HAP-1 (cell line): ENCODE measurements at regions of chr10 and their contacts with region 1.

Region 1: GRCh38 chr10:69237528-69238159 is 17.5 kb downstream of the HKDC1 start:
- DNase-seq: peak; percentile 62 to 91
- H3K4me3 ChIP-seq: no peak overlapping the region
- H3K4me1 ChIP-seq: peaks cover 3% of the 10 kb centered on the region
- H3K27me3 ChIP-seq: no peaks in the 10 kb centered on the region

Region 2: DNA sequence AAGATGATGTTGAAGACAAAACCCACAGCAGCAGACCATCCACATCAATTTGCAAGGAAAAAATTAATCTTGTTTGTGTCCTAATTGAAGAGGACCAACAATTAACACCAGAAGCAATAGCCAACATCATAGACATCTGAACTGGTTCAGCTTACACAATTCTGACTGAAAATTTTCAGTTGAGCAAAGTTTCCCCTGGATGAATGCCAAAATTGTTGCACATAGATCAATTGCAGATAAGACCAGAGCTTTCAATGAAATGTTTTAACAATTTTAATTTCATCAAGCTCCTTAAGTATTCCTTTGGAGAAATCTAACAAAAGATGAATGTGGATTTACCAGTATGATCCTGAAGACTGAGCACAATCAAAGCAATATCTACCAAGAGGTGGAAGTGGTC is 1710.3 kb before region 1 on chr10:
- in situ Hi-C with region 1: no loop called
- DNase-seq: no peak
- H3K4me3 ChIP-seq: no peak overlapping the region
- H3K4me1 ChIP-seq: peaks cover 17% of the 10 kb centered on the region
- H3K27me3 ChIP-seq: no peaks in the 10 kb centered on the region

Region 3: DNA sequence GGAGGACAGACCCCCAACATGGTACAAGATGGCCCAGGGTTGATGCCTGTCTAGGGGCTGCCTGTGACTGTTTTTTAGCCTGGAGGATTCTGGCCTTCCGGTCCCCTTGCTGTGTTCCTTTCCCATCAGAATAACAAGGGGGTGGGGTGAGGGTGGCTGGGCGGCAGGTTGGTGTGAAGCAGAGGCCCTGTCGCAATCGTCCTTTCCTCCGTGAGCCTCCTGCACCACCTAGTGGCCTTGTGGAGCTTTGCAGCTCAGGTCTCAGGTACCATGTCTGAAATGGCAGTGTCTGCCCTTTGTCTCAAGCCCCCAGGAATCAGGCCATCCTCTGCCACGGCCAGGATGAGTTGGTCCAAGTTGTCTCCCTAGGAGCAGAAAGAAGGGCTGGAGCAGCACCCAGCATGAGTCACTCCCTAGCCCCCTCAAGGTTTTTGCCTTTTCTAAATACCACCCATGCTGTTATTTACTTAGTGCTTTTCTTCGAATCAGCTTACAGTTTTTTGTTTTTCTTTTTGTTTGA is 154.9 kb after region 1 on chr10:
- in situ Hi-C with region 1: loop called (anchors 5 kb)
- DNase-seq: peak; percentile 81 to 88
- H3K4me3 ChIP-seq: no peak overlapping the region
- H3K4me1 ChIP-seq: no peaks in the 10 kb centered on the region
- H3K27me3 ChIP-seq: no peaks in the 10 kb centered on the region

Region 4: DNA sequence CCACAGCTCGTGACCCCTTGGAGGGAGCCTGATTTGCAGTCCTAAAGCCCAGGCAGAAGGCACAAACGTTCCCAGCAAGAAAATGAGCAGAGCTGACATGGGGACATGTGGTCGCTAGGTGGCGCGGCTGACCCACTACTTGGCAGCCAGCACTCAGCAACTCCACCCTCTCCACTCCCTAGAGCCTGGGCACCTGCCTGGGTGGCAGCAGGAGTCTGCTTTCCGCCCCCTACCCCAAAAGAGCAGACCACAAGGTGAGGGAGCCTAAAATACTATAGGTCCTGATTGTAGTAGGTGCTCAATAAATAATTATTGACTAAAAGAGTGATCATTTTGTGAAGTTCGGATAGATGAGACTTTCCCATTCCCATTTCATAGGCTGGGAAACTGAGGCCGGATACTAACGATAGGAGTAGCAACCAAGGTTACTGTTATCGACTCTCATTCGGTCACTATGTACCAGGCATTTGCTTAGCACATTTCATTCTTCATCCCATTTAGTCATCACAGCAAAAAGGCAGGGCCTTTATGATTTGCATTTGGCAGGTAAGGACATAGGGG is 278.1 kb after region 1 on chr10:
- in situ Hi-C with region 1: loop called (anchors 25 kb)
- DNase-seq: peak; percentile 78 to 86
- H3K4me3 ChIP-seq: no peak overlapping the region
- H3K4me1 ChIP-seq: no peaks in the 10 kb centered on the region
- H3K27me3 ChIP-seq: no peaks in the 10 kb centered on the region